Activated CD4-positive, alpha-beta memory T cell treated with anti-CD3 and anti-CD28 coated beads for 36 hours (primary cell): ENCODE measurements at regions of chr9 and their contacts with region 1.

Region 1: GRCh38 chr9:31486630-31487029 is 897.8 kb upstream of the ACO1 start:
- DNase-seq: no peak
- H3K4me3 Mint-ChIP-seq: no peak overlapping the region
- H3K27ac Mint-ChIP-seq: no peak overlapping the region
- H3K4me1 Mint-ChIP-seq: no peaks in the 10 kb centered on the region
- H3K27me3 Mint-ChIP-seq: no peaks in the 10 kb centered on the region

Region 2: DNA sequence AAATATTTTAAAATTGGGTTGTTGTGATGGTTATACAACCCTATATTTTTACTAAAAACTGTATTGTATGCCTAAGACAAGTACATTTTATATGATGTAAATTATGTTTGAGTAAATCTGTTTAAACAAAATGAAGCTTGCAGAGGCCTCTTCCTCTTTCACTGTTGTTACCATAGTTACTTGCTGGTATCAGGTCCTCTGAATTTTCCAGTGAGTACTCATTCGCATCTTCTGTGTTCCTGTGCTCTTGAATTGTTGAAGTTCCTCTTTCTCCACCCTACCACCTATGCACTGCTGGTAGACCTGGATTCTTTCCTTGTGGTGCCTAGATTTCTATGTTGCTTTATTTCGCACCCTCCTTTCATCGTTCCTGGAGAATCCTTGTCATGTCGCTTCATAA is 40.7 kb before region 1 on chr9:
- CTCF ChIA-PET with region 1: no interaction called
- POLR2A ChIA-PET with region 1: no interaction called
- intact Hi-C with region 1: loop called (anchors 5 kb)
- DNase-seq: no peak
- H3K4me3 Mint-ChIP-seq: no peak overlapping the region
- H3K27ac Mint-ChIP-seq: no peak overlapping the region
- H3K4me1 Mint-ChIP-seq: peaks cover 12% of the 10 kb centered on the region
- H3K27me3 Mint-ChIP-seq: no peaks in the 10 kb centered on the region

Region 3: GRCh38 chr9:31467086-31467485 is 19.5 kb before region 1 on chr9:
- CTCF ChIA-PET with region 1: no interaction called
- POLR2A ChIA-PET with region 1: no interaction called
- intact Hi-C with region 1: no loop called
- DNase-seq: no peak
- H3K4me3 Mint-ChIP-seq: no peak overlapping the region
- H3K27ac Mint-ChIP-seq: no peak overlapping the region
- H3K4me1 Mint-ChIP-seq: peaks cover 9% of the 10 kb centered on the region
- H3K27me3 Mint-ChIP-seq: no peaks in the 10 kb centered on the region

Region 4: GRCh38 chr9:31700252-31701045 is 213.8 kb after region 1 on chr9:
- CTCF ChIA-PET with region 1: no interaction called
- POLR2A ChIA-PET with region 1: no interaction called
- intact Hi-C with region 1: no loop called
- DNase-seq: peak; percentile 14
- H3K4me3 Mint-ChIP-seq: no peak overlapping the region
- H3K27ac Mint-ChIP-seq: peak overlapping the region; percentile 36
- H3K4me1 Mint-ChIP-seq: peaks cover 13% of the 10 kb centered on the region
- H3K27me3 Mint-ChIP-seq: no peaks in the 10 kb centered on the region